ENCODE measurements at regions of chr6 and their contacts with region 1.

Region 1: DNA sequence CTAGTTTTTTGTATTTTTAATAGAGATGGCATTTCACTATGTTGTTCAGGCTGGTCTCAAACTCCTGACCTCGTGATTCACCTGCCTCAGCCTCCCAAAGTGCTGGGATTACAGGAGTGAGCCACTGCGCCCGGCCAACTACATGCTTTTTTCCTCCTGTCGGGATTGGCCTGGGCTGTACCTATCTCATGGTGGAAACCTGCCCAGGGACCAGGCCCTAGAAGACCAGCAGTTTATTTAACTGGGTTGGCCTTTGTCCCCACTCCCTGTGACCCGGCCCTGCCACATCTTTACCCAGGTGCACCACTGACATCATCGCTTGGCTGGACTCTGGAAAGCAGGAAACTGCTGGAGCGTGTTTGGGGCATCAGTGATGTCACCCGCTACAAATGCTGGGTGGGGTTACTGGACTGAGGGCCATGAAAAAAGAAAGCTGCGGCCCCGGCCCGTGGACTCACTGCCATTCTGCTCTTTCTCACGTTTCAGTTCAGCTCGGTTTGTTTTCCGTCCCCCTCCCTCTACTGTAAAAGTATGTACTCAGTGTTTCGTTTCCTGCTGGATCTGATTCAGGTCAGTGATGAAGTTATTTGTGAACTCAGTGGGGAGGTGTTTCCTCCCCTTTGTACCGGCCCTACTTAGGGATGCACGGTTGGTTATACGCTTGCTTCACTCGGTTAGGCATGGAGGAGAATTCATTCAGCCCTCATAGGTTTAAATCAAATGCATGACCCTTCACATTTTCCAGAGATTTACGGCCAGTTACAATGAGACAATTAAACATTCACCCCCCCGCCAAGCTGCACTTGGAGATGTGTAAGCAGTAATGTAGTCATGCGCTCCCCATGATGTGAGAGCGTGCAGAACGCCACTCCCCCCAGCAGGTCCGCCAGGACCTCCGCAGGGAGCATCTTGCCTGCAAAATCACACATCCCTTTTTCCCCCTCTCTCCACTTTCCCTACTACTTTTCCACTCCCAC is 179.3 kb downstream of the MTHFD1L start:
- DNase-seq: no peak
- ATAC-seq: no peak
- H3K4me3 Mint-ChIP-seq: no peak overlapping the region
- H3K27ac Mint-ChIP-seq: no peak overlapping the region
- H3K4me1 Mint-ChIP-seq: peaks cover 2% of the 10 kb centered on the region
- H3K27me3 Mint-ChIP-seq: no peaks in the 10 kb centered on the region
- CTCF ChIP-seq: no peak

Region 2: GRCh38 chr6:150445486-150445885 is 599.3 kb before region 1 on chr6:
- CTCF ChIA-PET with region 1: no interaction called
- POLR2A ChIA-PET with region 1: interaction called, 10 read pairs
- intact Hi-C with region 1: no loop called
- DNase-seq: no peak
- ATAC-seq: no peak
- H3K4me3 Mint-ChIP-seq: no peak overlapping the region
- H3K27ac Mint-ChIP-seq: no peak overlapping the region
- H3K4me1 Mint-ChIP-seq: no peaks in the 10 kb centered on the region
- H3K27me3 Mint-ChIP-seq: peaks cover 7% of the 10 kb centered on the region
- CTCF ChIP-seq: no peak

Region 3: DNA sequence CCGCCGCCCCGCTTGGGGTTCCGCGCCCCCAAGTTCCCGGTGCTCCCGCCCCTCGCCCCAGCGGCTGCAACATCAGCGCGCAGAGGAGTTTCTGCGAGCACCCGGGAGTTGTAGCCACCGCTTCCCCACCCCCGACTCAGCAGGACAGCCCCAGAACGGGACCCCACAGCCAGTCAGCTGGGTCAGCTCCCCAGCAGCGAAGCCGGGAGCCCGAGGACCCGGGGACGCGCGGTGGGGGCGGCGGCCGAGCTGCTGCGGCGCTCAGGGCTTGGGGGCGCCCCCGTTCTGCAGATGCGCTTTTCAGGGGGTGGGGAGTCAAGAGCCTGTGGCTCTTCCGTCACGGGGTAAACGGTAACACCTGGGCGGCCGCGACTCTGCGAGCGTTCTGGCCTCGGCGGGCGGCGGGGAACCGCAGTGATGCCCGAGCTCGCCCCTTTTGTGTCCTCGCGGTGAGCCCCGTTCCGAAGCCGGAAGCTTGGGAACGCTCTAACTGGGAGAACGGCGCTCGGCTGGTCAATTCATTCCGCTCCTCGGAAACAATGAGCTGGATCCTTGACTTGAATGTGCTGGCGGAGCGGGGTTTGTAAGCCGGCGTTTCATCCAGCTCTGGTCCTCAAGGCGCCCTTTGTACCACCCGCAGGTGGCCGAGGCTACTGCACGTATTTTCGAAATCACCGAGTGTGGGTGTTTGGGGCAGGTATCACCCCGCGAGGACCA is 444.3 kb before region 1 on chr6:
- CTCF ChIA-PET with region 1: no interaction called
- POLR2A ChIA-PET with region 1: no interaction called
- intact Hi-C with region 1: no loop called
- DNase-seq: peak; percentile 82
- ATAC-seq: peak; percentile 70
- H3K4me3 Mint-ChIP-seq: peak overlapping the region; percentile 98
- H3K27ac Mint-ChIP-seq: peak overlapping the region; percentile 97
- H3K4me1 Mint-ChIP-seq: peaks cover 68% of the 10 kb centered on the region
- H3K27me3 Mint-ChIP-seq: no peaks in the 10 kb centered on the region
- CTCF ChIP-seq: no peak

Region 4: DNA sequence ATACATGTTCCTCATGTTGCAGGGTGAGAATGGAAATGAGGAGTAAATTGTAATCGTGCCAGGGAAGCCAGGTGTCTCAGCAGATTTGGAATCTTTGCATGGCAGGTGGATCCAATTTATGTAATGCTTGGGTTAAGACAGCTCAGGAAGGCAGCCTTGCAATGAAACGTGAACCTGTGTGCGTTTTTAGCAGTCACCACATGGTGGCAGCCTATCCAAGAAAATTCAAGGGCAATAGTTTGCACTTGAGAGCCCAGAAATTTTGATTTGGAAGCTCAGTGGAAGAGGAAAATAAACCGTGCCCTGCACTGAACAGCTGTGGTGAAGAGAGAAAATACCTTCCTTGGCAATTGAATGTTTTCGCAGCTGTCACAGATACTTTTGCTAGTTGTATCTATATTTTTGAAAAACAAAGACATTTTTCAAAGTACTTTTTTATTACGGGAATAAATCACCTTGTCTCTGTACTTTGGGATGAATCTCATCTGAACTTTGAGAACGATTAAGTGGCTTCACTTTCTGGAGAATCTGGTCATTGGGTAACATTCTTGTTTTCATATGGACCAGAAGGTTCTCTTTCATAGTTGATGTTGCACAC is 152.8 kb before region 1 on chr6:
- CTCF ChIA-PET with region 1: no interaction called
- POLR2A ChIA-PET with region 1: no interaction called
- intact Hi-C with region 1: no loop called
- DNase-seq: peak; percentile 21
- ATAC-seq: peak; percentile 75
- H3K4me3 Mint-ChIP-seq: no peak overlapping the region
- H3K27ac Mint-ChIP-seq: no peak overlapping the region
- H3K4me1 Mint-ChIP-seq: peaks cover 25% of the 10 kb centered on the region
- H3K27me3 Mint-ChIP-seq: no peaks in the 10 kb centered on the region
- CTCF ChIP-seq: peak; percentile 83

Measured in activated B cell treated with CpG ODN at 0.5 μM for 24 hours (primary cell).